ENCODE measurements at regions of chr15 and their contacts with region 1.

Region 1: GRCh38 chr15:55649054-55649423 is 60.9 kb upstream of the PYGO1 start:
- DNase-seq: peak; percentile 44
- H3K4me3 ChIP-seq: no peak overlapping the region
- H3K27ac ChIP-seq: no peak overlapping the region
- H3K4me1 ChIP-seq: no peaks in the 10 kb centered on the region
- H3K27me3 ChIP-seq: no peaks in the 10 kb centered on the region
- CTCF ChIP-seq: no peak

Region 2: DNA sequence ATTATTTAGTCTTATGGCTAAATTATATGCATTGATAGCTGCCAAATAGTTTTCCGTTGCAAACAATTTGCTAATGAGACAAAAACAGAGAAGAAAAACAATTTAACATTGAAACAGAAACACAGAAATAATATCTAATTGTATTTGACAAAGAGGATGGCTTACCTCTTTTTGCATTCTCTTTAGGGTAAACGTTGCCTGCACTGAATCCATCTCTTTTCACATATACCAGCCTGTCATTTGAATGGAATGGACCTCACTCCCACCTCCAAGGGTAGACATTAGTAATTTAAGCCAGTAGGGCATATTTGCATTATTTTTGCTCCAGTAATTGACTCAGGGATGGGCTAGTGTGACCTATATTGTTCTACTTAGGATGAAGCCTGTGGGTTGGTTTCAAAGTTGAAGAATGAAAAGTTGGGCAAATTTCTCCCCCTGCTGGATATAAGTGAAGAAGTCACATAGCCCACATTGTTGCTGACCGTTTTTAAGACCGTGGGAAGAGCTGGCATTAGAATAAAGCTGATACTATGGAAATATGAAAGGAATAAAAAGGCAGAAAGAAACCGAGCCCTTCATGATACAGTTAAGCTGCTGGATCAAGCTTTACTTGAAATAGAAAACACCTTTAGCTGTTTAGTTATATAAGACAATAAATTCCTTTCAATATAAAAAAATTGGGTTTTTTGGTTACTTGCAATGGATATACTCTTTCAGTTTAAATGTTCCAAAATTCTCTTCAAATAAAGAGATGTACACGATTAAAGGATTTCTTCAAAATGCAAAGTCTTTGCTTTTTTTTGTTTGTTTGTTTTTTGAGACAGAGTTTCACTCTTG is 213.8 kb before region 1 on chr15:
- CTCF ChIA-PET with region 1: no interaction called
- dilution Hi-C with region 1: no loop called
- in situ Hi-C with region 1: no loop called
- intact Hi-C with region 1: loop called (anchors 5 kb)
- DNase-seq: peak; percentile 40
- H3K4me3 ChIP-seq: no peak overlapping the region
- H3K27ac ChIP-seq: no peak overlapping the region
- H3K4me1 ChIP-seq: no peaks in the 10 kb centered on the region
- H3K27me3 ChIP-seq: no peaks in the 10 kb centered on the region
- CTCF ChIP-seq: peak; percentile 45 to 64

Region 3: DNA sequence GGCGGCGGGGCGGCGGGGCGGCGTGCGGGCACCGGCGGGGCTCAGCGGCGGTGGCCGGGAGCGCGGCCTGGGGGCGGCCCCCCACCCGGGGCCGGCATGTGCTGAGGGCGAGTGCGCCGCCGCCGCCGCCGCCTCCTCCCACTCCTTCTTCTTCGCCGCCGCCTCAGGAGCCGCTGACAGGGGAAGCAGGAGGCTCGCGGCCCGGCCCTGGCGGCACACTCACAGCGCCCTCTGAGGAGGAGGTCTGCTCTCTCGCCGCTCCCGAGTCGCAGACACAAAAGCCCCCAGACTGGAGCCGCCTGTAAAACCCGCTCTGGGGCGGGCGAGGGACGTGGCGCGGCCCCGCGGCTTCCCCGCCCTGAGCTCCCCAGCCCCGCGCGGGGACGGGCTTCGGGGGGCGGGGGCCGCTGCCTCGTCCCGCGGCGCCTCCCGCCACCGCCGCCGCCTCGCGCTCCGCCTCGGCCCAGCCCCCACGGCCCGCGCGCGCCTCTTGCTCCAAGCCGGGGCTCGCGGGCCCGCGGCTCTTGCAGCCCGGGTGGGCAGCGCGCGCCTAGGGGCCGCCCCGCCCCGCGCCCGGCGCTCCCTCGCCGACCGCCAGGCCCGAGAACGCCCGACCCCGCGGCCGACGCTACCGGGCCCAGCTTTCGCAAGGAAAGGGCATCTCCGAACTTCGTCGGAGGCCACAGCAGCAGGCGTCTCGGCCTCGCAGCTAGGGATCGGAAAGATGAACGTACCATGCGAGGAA is 60.8 kb before region 1 on chr15 and contains the start of gene PYGO1:
- CTCF ChIA-PET with region 1: interaction called, 11 read pairs
- dilution Hi-C with region 1: no loop called
- in situ Hi-C with region 1: no loop called
- intact Hi-C with region 1: no loop called
- DNase-seq: peak; percentile 34
- H3K4me3 ChIP-seq: peak within 1 kb of the TSS; percentile 51 to 57 (median 53)
- H3K27ac ChIP-seq: no peak within 1 kb of the TSS
- H3K4me1 ChIP-seq: peaks cover 3% of the 10 kb centered on the region
- H3K27me3 ChIP-seq: peaks cover 18% of the 10 kb centered on the region
- CTCF ChIP-seq: no peak
- total RNA-seq, gene PYGO1: 1.0 to 5.8 TPM

Region 4: DNA sequence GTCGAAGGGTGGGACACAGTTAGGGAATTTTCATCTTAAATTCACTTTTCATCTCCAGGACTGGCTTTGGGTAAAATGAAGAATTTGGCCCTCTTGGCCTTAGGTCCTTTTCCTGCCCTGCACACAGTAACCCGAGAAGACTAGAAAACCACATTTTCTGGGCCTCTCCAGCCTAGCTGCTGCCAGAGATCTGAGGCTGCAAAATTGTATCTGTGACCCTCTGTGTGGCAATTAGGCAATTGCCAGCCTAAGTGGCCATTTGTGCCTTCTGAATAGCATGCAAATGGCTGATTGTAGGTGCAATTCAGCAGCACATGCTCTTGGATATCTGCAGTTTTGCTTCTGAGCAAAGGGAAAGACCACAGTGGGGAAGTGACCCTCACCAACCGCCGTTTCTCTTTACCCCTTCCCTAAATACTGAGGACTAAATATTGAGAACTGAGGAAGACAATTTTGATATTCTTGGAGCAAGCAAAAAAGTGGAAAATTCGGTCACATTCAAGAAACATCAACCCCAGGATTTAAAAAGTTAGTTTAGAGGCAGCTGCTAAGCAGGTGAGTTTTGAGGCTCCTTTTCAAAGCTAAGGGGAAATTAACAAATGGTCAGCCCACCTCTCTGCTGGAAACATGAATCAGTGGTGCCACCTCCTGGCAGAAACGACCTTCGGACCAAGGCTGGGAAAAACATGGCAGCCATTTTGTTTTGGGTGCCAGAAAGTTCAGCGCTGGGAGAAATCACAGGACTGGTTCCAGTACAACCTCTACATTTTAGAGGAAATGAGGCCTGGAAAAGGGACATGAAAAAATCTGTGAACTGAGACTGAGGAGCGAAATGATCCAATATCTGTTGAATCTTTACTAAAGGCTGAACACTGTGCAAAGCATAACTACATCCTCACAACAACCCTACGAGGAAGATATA is 150.5 kb after region 1 on chr15:
- CTCF ChIA-PET with region 1: no interaction called
- dilution Hi-C with region 1: no loop called
- in situ Hi-C with region 1: loop called in 1 of 2 experiments (anchors 10 kb)
- intact Hi-C with region 1: loop called (anchors 1 kb)
- DNase-seq: no peak
- H3K4me3 ChIP-seq: no peak overlapping the region
- H3K27ac ChIP-seq: no peak overlapping the region
- H3K4me1 ChIP-seq: peaks cover 4% of the 10 kb centered on the region
- H3K27me3 ChIP-seq: no peaks in the 10 kb centered on the region
- CTCF ChIP-seq: peak; percentile 52 to 69

Region 5: DNA sequence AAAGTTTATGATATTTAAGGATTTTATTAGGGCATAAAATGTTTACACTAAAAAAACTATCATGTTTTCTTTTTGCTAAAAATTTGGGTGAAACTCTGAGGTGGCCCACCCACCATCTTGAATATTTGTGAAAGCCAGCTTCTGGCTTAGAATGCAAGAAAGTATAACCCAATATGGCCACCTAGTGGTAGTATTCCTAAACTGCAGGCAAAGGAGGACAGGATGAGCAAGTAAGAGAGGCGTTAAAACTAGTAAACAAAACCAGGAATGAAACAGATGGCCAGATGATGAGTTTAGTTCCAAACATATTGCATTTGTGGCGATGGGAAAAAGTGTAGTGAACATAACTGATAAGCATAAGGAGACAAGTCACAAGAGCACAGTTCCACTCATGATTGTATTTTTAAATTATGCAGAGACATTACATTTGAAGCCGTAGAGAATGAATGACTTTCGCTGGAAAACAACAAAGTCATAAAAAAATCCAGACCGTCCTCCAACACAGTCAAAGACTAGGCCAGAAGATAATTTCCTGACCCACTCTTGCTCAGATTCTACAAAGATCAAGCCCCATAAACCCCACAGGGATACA is 197.2 kb after region 1 on chr15:
- CTCF ChIA-PET with region 1: interaction called, 6 read pairs
- dilution Hi-C with region 1: no loop called
- in situ Hi-C with region 1: loop called in 1 of 2 experiments (anchors 10 kb)
- intact Hi-C with region 1: loop called (anchors 1 kb)
- DNase-seq: peak; percentile 65
- H3K4me3 ChIP-seq: no peak overlapping the region
- H3K27ac ChIP-seq: no peak overlapping the region
- H3K4me1 ChIP-seq: no peaks in the 10 kb centered on the region
- H3K27me3 ChIP-seq: no peaks in the 10 kb centered on the region
- CTCF ChIP-seq: peak; percentile 86 to 94

Region 6: DNA sequence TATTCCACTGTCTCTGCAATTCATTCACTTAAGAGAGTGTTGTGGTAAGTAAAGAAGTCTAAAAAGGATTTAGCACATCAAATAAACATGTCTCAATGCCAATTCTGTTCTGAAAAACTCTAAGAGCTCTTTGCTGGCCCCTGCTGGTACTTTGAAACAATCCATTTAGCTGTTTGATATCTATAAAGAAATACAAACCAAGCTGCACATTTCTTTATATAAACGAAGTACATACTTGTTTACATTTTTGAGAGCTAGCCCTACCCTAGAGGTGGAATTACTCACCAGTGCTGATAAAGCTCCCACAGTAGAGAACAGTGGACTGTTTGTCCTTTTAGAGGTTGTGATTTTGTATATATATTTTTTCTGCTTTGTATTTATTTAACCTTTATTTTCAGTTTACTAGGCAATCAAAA is 268.9 kb after region 1 on chr15:
- CTCF ChIA-PET with region 1: interaction called, 9 read pairs
- dilution Hi-C with region 1: no loop called
- in situ Hi-C with region 1: no loop called
- intact Hi-C with region 1: loop called (anchors 1 kb)
- DNase-seq: peak; percentile 86
- H3K4me3 ChIP-seq: peak overlapping the region in 1 of 3 experiments; percentile 25
- H3K27ac ChIP-seq: peak overlapping the region; percentile 92
- H3K4me1 ChIP-seq: peaks cover 28% of the 10 kb centered on the region
- H3K27me3 ChIP-seq: no peaks in the 10 kb centered on the region
- CTCF ChIP-seq: peak; percentile 65 to 67

Region 7: DNA sequence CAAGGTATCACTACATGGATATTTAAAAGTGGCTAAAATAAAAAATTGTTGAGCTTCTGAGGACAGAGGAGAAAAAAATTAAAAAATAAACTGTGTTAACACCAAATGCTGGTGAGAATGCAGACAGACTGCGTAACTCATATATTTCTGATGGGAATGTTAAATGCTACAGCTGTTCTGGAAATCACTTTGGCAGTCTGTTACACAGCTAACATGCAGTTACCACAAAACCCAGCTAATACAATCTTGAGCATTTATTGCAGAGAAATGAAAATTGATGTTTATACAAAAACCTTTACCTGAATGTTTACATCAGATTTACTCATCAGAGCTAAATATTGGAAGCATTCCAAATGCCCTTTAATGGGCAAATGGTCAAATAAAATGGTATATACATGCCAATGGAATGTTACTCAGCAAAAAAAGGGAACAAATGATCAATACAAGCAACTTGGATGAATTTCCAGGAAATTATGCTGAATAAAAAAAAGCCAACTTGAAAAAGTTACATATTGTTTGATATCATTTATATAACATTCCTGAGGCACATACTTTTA is 791.3 kb after region 1 on chr15:
- CTCF ChIA-PET with region 1: no interaction called
- dilution Hi-C with region 1: no loop called
- in situ Hi-C with region 1: no loop called
- intact Hi-C with region 1: loop called (anchors 5 kb)
- DNase-seq: peak; percentile 9
- H3K4me3 ChIP-seq: no peak overlapping the region
- H3K27ac ChIP-seq: no peak overlapping the region
- H3K4me1 ChIP-seq: no peaks in the 10 kb centered on the region
- H3K27me3 ChIP-seq: no peaks in the 10 kb centered on the region
- CTCF ChIP-seq: no peak

Measured in mammary epithelial cell (primary cell).